ENCODE measurements at regions of chr7 and their contacts with region 1.

Region 1: DNA sequence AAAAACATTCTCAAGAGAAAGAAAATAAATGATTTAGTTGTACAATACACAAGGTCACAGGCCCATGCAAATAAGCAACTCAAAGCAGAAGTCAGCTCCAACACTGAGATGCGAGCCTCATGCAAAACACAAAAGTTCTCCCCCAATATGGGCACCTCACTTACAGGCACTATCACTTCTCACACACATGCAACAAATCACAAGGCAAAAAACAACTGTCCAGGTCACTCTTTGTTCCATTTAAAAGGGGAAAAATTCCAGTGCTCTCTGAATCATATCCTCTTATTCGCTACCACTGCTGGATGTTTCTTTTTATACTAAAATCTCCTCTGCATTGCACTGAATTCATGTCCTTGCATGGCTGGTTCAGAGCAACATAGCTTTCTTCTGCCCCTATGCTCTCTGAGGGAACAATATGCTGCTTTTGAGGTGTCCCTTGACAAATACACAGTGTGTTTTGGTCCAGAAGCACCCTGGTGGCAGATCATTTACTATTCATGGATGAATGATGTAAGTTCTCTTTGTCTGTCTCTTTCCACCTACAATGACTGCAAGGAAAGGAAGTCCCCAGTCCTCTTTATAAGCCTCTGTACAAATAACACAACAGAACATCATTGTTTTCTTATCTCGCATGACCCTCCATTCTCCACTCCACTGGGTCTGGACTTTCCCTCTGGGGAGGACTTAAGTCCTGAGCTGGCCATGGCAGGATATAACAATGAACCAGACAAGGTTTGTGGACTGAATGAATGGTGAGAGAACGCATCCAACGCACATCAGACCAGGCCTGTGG is 85.4 kb upstream of the GSDME start:
- DNase-seq: no peak
- H3K4me3 ChIP-seq: no peak overlapping the region
- H3K4me3 Mint-ChIP-seq: no peak overlapping the region
- H3K27ac Mint-ChIP-seq: no peak overlapping the region
- H3K4me1 ChIP-seq: peaks cover 17% of the 10 kb centered on the region; the same call in 1 of the 2 replicates
- H3K4me1 Mint-ChIP-seq: peaks cover 33% of the 10 kb centered on the region
- H3K27me3 ChIP-seq: no peaks in the 10 kb centered on the region
- H3K27me3 Mint-ChIP-seq: no peaks in the 10 kb centered on the region
- CTCF ChIP-seq: no peak

Region 2: DNA sequence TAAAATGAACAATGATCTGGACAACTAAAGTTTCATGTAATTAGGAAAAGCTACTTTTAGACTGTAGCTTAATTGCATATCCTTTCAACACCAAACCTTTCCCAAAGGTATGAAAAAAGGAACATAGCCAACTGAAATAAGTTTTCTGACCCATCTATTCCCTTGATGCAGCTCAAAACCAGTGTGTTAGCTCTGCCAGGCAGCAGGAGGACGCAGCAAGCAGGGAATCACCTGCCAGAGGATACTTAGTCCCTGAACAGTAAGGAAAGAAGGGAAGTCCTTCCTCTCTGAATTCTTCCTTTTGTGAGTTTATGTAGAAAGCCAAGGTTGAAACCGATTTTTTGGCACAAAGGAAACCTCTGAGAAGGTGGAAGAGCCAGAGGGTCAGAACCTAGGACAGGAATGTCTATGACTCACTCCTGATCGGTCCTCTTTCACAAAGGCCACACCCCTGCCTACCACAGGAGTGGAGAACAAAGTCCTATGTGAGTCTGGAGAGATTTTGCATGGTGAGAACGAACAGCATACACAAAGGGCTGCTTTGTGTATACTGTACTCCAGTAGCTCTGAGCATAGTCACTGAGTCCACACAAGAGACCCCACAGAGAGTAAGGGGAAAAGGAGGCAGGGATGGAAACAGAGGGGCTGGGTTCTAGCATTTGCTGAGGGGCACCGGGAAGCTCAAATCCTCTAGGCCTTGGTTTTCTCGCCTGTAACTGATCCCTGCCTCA is 16.5 kb before region 1 on chr7:
- CTCF ChIA-PET with region 1: no interaction called
- POLR2A ChIA-PET with region 1: no interaction called
- intact Hi-C with region 1: loop called (anchors 1 kb)
- DNase-seq: peak; percentile 80 to 92
- H3K4me3 ChIP-seq: no peak overlapping the region
- H3K4me3 Mint-ChIP-seq: peak overlapping the region; percentile 62
- H3K27ac Mint-ChIP-seq: peak overlapping the region; percentile 94
- H3K4me1 ChIP-seq: peaks cover 76% of the 10 kb centered on the region
- H3K4me1 Mint-ChIP-seq: peaks cover 43% of the 10 kb centered on the region
- H3K27me3 ChIP-seq: no peaks in the 10 kb centered on the region
- H3K27me3 Mint-ChIP-seq: no peaks in the 10 kb centered on the region
- CTCF ChIP-seq: no peak

Region 3: DNA sequence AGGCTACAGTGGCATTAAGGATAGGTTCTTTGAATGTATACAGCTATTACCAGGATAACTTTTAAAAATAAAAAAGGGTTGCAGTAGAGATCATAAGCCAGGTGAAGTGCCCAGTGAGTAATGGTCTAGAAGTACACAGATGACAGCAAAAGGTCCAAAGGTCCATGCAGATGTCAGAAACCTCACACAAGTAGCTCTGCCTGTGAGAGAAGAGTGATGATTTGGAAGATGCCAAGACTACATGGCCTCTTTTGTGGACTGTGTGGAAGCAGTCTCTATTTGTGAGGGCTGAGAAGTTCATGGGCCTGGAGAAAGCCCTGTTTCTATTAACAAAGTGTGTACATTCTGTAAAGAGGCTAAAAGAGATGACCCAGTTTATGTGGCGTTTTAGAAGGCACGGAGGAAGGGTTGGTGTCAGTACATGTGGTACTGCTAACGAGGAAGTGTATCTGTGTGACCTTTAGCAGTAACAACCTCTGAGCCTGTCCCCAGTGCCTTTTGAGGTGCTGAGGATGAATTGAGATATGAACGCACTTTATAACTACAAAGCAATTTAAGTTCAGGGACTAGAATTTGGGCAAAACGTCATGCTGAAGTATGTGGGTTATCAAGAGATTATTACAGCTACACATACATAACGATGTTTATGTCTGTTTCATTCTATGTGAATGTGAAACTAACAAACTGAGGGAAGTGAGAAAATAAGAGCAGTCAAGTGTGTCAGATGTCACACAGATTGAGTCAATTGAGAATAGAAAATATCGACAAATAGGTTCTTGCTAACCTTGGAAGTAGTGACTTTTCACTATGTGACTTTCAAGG is 274.8 kb after region 1 on chr7:
- CTCF ChIA-PET with region 1: no interaction called
- POLR2A ChIA-PET with region 1: no interaction called
- intact Hi-C with region 1: no loop called
- DNase-seq: no peak
- H3K4me3 ChIP-seq: no peak overlapping the region
- H3K4me3 Mint-ChIP-seq: no peak overlapping the region
- H3K27ac Mint-ChIP-seq: no peak overlapping the region
- H3K4me1 ChIP-seq: peaks cover 12% of the 10 kb centered on the region; the same call in 1 of the 2 replicates
- H3K4me1 Mint-ChIP-seq: peaks cover 7% of the 10 kb centered on the region
- H3K27me3 ChIP-seq: no peaks in the 10 kb centered on the region
- H3K27me3 Mint-ChIP-seq: no peaks in the 10 kb centered on the region
- CTCF ChIP-seq: no peak